ENCODE measurements at regions of chrX and their contacts with region 1.

Region 1: GRCh38 chrX:46758906-46759644 is at the start of gene SLC9A7:
- DNase-seq: peak; percentile 88
- ATAC-seq: peak; percentile 84
- H3K4me3 Mint-ChIP-seq: peak within 1 kb of the TSS; percentile 92
- H3K27ac Mint-ChIP-seq: peak within 1 kb of the TSS; percentile 91
- H3K4me1 Mint-ChIP-seq: peaks cover 28% of the 10 kb centered on the region
- H3K27me3 Mint-ChIP-seq: no peaks in the 10 kb centered on the region
- total RNA-seq, gene SLC9A7: 16.3 to 19.2 TPM

Region 2: DNA sequence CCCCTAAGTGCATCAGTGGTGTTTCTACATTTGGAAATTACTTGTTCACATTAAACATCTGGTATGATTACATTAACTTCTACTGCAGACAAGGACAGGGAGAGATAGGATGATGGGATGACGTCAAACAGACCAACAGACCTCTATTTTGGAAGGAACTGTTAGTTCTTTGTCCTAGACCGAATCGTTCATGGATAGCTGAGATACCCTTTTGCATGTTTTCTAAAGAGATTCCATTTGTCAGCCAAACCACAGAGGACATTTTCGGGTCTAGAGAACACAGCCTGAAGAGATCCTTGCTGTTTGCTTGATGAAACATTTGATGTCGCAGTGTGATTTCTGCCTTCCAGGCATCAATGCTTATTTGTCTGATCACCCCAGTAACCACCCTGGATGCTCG is 157.8 kb before region 1 on chrX:
- CTCF ChIA-PET with region 1: no interaction called
- POLR2A ChIA-PET with region 1: no interaction called
- intact Hi-C with region 1: no loop called
- DNase-seq: no peak
- ATAC-seq: no peak
- H3K4me3 Mint-ChIP-seq: no peak overlapping the region
- H3K27ac Mint-ChIP-seq: no peak overlapping the region
- H3K4me1 Mint-ChIP-seq: peaks cover 6% of the 10 kb centered on the region
- H3K27me3 Mint-ChIP-seq: no peaks in the 10 kb centered on the region

Region 3: DNA sequence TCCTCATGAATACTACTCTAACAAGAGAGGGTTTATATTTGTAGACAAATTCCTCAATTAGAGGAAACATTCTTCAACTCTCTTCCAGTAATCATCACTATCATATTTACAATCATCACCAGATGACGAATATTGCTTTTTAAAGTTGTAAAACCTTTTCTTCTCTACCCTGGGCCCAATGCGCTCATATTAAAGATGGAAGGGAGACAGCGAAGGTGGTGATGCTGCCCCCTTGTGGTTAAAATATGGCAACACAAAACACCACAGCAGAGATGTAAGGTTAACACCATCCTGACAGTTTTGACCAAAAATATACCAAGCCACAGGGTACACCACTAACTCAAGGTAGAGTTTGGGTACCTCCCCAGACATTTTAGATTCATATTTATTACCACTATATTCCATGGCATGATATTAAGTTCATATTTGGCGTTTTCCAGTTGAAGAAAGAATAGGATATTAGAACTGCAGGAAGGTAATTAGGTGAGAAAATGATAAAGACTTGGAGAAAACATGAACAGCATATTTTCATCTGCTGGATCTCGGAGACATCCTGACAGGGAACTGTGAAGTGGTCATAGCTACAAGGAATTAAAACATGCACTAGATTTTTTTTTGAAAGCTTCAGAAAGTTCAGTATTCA is 73.0 kb before region 1 on chrX:
- CTCF ChIA-PET with region 1: interaction called, 3 read pairs
- POLR2A ChIA-PET with region 1: no interaction called
- intact Hi-C with region 1: loop called in 1 of 2 experiments (anchors 5 kb)
- DNase-seq: peak; percentile 52
- ATAC-seq: peak; percentile 74
- H3K4me3 Mint-ChIP-seq: no peak overlapping the region
- H3K27ac Mint-ChIP-seq: peak overlapping the region; percentile 31
- H3K4me1 Mint-ChIP-seq: peaks cover 18% of the 10 kb centered on the region
- H3K27me3 Mint-ChIP-seq: no peaks in the 10 kb centered on the region

Region 4: GRCh38 chrX:46796574-46797191 is 37.6 kb after region 1 on chrX:
- CTCF ChIA-PET with region 1: interaction called, 27 read pairs
- POLR2A ChIA-PET with region 1: no interaction called
- intact Hi-C with region 1: loop called (anchors 1 kb)
- DNase-seq: peak; percentile 84
- ATAC-seq: peak; percentile 63
- H3K4me3 Mint-ChIP-seq: no peak overlapping the region
- H3K27ac Mint-ChIP-seq: no peak overlapping the region
- H3K4me1 Mint-ChIP-seq: peaks cover 19% of the 10 kb centered on the region
- H3K27me3 Mint-ChIP-seq: peaks cover 2% of the 10 kb centered on the region

Region 5: GRCh38 chrX:47030339-47030738 is 271.3 kb after region 1 on chrX:
- CTCF ChIA-PET with region 1: no interaction called
- POLR2A ChIA-PET with region 1: no interaction called
- intact Hi-C with region 1: loop called in 1 of 2 experiments (anchors 2 kb)
- DNase-seq: peak; percentile 3
- ATAC-seq: no peak
- H3K4me3 Mint-ChIP-seq: no peak overlapping the region
- H3K27ac Mint-ChIP-seq: no peak overlapping the region
- H3K4me1 Mint-ChIP-seq: no peaks in the 10 kb centered on the region
- H3K27me3 Mint-ChIP-seq: no peaks in the 10 kb centered on the region

Measured in activated CD4-positive, alpha-beta T cell treated with anti-CD3 and anti-CD28 coated beads for 36 hours (primary cell).